ENCODE measurements at regions of chr7 and their contacts with region 1.

Region 1: GRCh38 chr7:2657208-2657607 is 25.4 kb downstream of the TTYH3 start:
- DNase-seq: no peak
- ATAC-seq: no peak
- H3K4me3 ChIP-seq: no peak overlapping the region
- H3K27ac ChIP-seq: no peak overlapping the region
- H3K4me1 ChIP-seq: no peaks in the 10 kb centered on the region
- H3K27me3 ChIP-seq: no peaks in the 10 kb centered on the region
- CTCF ChIP-seq: no peak
- POLR2A ChIP-seq: no peak
- RAD21 ChIP-seq: no peak

Region 2: DNA sequence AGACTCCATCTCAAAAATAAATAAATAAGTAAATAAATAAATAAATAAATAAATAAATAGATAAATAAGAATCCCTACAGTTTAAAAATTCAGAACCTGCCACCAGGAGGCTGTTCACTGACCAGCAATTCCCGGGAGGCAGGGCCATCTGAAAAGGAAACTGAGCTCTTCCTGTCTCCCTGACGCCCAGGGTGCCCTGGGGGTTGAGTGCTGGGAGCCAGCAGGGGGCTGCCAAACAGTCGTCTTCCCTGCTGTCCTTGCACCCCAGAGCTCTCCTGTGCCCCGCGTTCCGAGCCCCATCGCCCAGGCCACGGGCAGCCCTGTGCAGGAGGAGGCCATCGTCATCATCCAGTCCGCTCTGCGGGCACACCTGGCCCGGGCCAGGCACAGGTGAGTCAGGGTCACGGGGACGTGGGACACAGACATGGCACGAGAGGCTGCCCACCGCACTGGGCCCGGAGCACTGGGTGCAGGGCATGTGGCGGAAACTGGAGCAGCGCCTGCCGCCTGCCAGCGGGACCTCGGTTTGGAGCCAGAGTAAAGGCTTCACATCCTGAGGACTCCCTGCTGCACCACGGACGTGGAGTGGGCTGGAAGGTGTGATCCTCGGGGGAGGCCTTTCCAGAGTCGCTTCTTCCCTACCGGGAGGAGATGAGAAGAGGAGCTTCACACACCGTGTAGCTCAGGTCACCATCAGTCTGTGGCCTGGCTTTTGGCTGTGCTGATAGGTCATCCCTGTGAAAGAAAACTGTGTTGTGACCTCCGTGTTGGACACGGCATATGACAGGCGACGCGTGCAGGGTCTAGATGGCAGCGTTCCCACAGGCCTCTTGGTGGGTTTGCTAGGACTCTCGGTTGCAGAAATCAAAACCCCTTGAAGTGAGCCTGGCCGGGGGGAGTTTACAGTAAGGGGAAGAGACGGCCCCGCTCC is 51.3 kb before region 1 on chr7:
- CTCF ChIA-PET with region 1: no interaction called
- POLR2A ChIA-PET with region 1: interaction called, 11 read pairs
- dilution Hi-C with region 1: no loop called
- in situ Hi-C with region 1: no loop called
- intact Hi-C with region 1: no loop called
- DNase-seq: no peak
- ATAC-seq: no peak
- H3K4me3 ChIP-seq: no peak overlapping the region
- H3K27ac ChIP-seq: no peak overlapping the region
- H3K4me1 ChIP-seq: no peaks in the 10 kb centered on the region
- H3K27me3 ChIP-seq: no peaks in the 10 kb centered on the region
- CTCF ChIP-seq: no peak
- POLR2A ChIP-seq: no peak
- RAD21 ChIP-seq: no peak